Left ventricle myocardium inferior (tissue), 1 donor: ENCODE measurements at regions of chr2 and their contacts with region 1.

Region 1: GRCh38 chr2:6896930-6897759 is 19.6 kb downstream of the RSAD2 start:
- DNase-seq: no peak
- H3K4me3 ChIP-seq: no peak overlapping the region
- H3K27ac ChIP-seq: peak overlapping the region; percentile 24
- H3K4me1 ChIP-seq: peaks cover 8% of the 10 kb centered on the region
- H3K27me3 ChIP-seq: no peaks in the 10 kb centered on the region
- CTCF ChIP-seq: peak; percentile 80

Region 2: GRCh38 chr2:6773007-6773693 is 124.0 kb before region 1 on chr2:
- intact Hi-C with region 1: no loop called
- DNase-seq: peak; percentile 52
- H3K4me3 ChIP-seq: peak overlapping the region; percentile 35
- H3K27ac ChIP-seq: no peak overlapping the region
- H3K4me1 ChIP-seq: peaks cover 13% of the 10 kb centered on the region
- H3K27me3 ChIP-seq: peaks cover 34% of the 10 kb centered on the region
- CTCF ChIP-seq: peak; percentile 98

Region 3: DNA sequence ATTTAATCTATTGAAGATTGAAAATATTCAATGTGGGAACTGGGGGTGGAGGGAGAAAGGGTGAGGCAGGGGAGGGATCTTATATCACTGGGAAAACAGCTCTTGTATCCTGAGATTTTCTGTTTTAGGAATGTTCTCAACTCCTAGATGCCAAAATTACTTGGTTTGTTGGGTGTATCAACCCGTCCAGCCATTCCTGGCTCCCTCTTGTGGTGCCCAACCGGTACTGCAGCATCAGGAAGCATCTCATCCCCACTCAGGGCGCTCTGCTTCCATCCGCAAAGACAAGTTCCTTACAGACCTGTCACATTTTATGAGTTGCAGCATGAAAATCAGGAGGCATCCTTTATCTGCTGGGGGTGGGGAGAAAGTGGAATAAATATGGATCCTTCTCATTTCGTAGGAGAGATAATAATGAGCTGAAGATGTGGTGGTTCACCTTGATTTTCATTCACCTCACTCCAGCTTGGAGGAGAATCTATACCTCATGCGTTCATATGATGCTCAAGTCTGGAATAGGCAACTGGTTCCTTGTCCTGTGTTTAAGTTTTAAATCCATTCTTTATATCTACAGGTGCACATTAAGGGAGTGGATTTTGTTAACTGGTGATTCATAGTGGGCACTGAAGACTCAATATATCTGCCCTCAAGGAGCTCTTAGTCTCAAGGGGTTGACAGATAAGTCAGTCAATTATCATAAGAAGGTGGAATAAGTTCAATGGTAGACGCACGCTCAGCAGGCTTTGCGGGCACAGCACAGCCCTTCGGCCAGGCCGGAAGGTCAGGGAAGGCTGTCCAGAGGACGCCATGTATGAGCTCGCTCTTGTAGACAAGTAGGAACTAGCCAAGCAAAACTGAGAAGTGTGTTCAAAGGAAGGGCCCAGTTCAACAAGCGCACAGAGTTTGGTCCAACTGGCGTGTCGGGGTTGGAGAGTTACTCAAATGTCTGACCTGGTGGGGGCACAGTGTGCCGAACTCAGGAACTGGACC is 147.4 kb after region 1 on chr2:
- intact Hi-C with region 1: loop called (anchors 5 kb)
- DNase-seq: peak; percentile 73
- H3K4me3 ChIP-seq: no peak overlapping the region
- H3K27ac ChIP-seq: no peak overlapping the region
- H3K4me1 ChIP-seq: peaks cover 5% of the 10 kb centered on the region
- H3K27me3 ChIP-seq: no peaks in the 10 kb centered on the region
- CTCF ChIP-seq: peak; percentile 98